ENCODE measurements at regions of chr2 and their contacts with region 1.

Region 1: DNA sequence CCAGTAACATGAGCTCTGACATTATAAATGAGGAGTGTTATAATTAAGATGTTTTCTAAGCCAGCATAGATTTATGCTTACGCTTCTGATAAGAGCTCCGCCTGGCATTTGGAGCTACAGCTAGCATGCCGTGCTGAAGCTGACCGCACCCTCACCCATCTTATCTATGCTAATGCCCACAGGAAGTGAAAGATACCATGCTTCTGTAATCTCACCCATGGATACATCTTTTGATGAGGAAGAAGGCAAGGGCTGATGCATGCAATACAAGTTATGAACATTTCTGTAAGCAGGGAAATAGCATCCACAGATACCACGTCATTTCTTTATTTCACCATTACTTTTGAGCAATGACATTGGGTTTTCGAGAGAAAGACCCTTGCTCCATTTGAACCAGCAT is 82.3 kb downstream of the ARL4C start:
- H3K4me3 Mint-ChIP-seq: no peak overlapping the region
- H3K27ac Mint-ChIP-seq: peak overlapping the region; percentile 91
- H3K4me1 Mint-ChIP-seq: peaks cover 27% of the 10 kb centered on the region
- H3K27me3 Mint-ChIP-seq: peaks cover 4% of the 10 kb centered on the region

Region 2: GRCh38 chr2:234446404-234447076 is 31.9 kb after region 1 on chr2:
- intact Hi-C with region 1: loop called (anchors 1 kb)
- H3K4me3 Mint-ChIP-seq: peak overlapping the region; percentile 51
- H3K27ac Mint-ChIP-seq: peak overlapping the region; percentile 99
- H3K4me1 Mint-ChIP-seq: peaks cover 60% of the 10 kb centered on the region
- H3K27me3 Mint-ChIP-seq: no peaks in the 10 kb centered on the region

Region 3: DNA sequence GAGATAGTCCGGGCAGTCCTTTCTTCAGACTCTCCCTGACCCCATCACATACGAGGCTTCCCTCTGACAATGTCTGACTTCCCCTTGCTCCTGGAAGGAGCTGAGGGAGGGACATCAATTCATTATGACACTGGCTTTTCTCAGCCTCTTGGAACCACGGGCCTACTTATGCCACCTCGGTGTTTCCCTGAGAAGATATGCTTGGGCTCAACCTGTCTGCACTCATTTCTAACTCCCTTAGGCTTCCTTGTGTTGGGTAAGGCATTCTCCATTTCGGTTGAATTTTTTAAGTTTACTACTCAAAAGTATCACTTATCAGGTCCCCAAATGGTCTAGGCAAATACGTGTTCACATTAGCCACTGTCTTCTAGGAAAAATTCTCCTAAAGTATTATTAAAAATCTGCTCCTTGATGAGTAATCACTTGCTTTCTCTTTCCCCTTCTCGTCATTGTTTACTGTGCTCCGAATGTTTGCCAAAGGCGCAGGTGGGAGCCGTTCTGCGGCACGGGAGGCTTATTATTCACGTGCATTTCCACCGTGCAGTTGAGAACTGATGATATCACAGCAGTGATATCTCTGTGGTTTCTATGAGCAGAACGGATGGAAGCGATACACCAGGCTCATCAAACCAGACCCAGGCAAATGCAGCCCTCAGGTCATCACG is 49.2 kb after region 1 on chr2:
- intact Hi-C with region 1: no loop called
- H3K4me3 Mint-ChIP-seq: no peak overlapping the region
- H3K27ac Mint-ChIP-seq: no peak overlapping the region
- H3K4me1 Mint-ChIP-seq: peaks cover 9% of the 10 kb centered on the region
- H3K27me3 Mint-ChIP-seq: peaks cover 16% of the 10 kb centered on the region

Region 4: DNA sequence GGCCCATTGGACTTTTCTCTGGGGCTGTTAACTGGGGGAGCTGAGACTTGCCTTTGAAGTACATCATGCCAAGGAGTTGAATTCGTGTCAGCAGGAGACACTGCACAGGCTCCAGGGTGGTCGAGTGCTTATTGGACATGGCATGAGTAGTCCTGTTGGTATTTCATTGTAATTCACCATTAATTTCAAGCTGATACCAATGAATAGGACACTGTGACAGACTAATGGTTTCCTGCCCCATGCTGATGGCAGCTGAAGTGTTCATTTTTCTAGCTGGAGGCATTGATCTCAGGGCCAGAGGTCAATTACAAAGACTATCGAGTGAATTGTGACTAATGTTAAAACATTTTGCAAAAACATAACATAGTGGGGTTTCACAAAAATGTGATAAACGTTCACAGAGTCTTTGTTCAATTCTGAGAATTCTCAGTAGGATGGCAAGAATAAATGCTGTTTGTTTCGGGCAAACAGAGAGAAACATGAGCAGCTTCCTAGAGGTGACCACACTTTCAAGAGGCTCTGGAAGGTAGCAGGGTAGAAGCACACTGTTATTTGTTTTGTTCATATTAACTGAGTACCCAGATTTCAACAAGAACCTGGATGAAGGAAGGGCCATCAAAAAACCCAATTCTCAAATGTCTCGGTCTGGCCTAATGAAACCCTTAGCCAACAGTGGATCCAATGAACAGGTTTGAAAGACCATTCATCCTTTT is 172.9 kb after region 1 on chr2:
- intact Hi-C with region 1: no loop called
- H3K4me3 Mint-ChIP-seq: no peak overlapping the region
- H3K27ac Mint-ChIP-seq: no peak overlapping the region
- H3K4me1 Mint-ChIP-seq: no peaks in the 10 kb centered on the region
- H3K27me3 Mint-ChIP-seq: peaks cover 5% of the 10 kb centered on the region